ENCODE measurements at regions of chr18 and their contacts with region 1.

Region 1: DNA sequence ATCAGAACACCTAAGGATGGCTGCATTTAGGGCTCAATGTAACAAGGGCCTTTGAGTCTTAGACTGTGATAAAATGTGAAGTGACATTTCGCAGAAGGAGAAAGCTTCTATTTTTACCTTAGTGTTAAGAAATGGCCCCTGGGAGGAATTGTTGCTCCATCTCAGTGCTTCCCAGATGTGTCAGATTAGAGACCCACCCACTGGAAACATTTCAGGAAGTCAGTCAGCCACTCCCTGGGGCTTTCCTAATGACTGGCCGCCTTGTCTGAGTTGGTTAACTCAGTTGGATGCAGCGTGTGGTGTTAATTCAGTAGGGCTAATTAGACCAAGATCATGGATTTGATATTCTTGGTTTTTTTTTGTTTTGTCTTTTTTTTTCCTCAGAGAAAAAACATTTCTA is 355.9 kb downstream of the PIK3C3 start:
- DNase-seq: peak; percentile 29 to 64
- ATAC-seq: peak; percentile 75 to 76
- H3K4me3 ChIP-seq: no peak overlapping the region
- H3K27ac ChIP-seq: no peak overlapping the region
- H3K4me1 ChIP-seq: no peaks in the 10 kb centered on the region
- H3K27me3 ChIP-seq: no peaks in the 10 kb centered on the region
- CTCF ChIP-seq: no peak
- POLR2A ChIP-seq: no peak

Region 2: GRCh38 chr18:41906528-41907146 is 404.3 kb before region 1 on chr18:
- in situ Hi-C with region 1: no loop called
- intact Hi-C with region 1: no loop called
- DNase-seq: no peak
- ATAC-seq: no peak
- H3K4me3 ChIP-seq: no peak overlapping the region
- H3K27ac ChIP-seq: no peak overlapping the region
- H3K4me1 ChIP-seq: no peaks in the 10 kb centered on the region
- H3K27me3 ChIP-seq: no peaks in the 10 kb centered on the region
- CTCF ChIP-seq: peak; percentile 13 to 59 (median 41)
- POLR2A ChIP-seq: no peak

Region 3: DNA sequence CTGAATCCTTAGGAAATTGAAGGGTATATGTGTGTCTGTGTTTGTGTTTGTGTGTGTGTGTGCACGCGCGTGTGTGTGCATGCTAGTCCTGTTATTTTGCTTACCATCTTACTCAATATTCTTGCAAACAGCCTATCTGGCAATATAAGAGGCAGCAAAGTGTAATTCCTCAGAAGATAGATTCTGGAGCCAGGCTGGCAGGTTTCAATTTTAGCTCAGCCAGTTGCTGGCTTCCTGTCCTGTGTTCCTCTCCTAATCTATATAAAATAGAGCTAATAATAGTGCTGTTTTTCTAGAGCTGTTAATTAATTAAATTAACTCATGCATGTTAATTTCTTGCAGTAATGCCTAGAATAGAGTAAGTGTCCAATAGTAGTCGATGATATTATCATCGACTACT is 99.8 kb before region 1 on chr18:
- in situ Hi-C with region 1: loop called in 1 of 4 experiments (anchors 25 kb)
- intact Hi-C with region 1: no loop called
- DNase-seq: no peak
- ATAC-seq: no peak
- H3K4me3 ChIP-seq: no peak overlapping the region
- H3K27ac ChIP-seq: no peak overlapping the region
- H3K4me1 ChIP-seq: no peaks in the 10 kb centered on the region
- H3K27me3 ChIP-seq: no peaks in the 10 kb centered on the region
- CTCF ChIP-seq: no peak
- POLR2A ChIP-seq: no peak

Region 4: GRCh38 chr18:42351455-42351854 is 40.5 kb after region 1 on chr18:
- in situ Hi-C with region 1: no loop called
- intact Hi-C with region 1: no loop called
- DNase-seq: no peak
- ATAC-seq: no peak
- H3K4me3 ChIP-seq: no peak overlapping the region
- H3K27ac ChIP-seq: no peak overlapping the region
- H3K4me1 ChIP-seq: no peaks in the 10 kb centered on the region
- H3K27me3 ChIP-seq: no peaks in the 10 kb centered on the region
- CTCF ChIP-seq: no peak
- POLR2A ChIP-seq: no peak

Region 5: GRCh38 chr18:42675810-42676209 is 364.9 kb after region 1 on chr18:
- in situ Hi-C with region 1: no loop called
- intact Hi-C with region 1: no loop called
- DNase-seq: no peak
- ATAC-seq: no peak
- H3K4me3 ChIP-seq: no peak overlapping the region
- H3K27ac ChIP-seq: no peak overlapping the region
- H3K4me1 ChIP-seq: no peaks in the 10 kb centered on the region
- H3K27me3 ChIP-seq: no peaks in the 10 kb centered on the region
- CTCF ChIP-seq: no peak
- POLR2A ChIP-seq: no peak